Prostate gland (tissue), 2 donors: ENCODE measurements at regions of chr11 and their contacts with region 1.

Region 1: DNA sequence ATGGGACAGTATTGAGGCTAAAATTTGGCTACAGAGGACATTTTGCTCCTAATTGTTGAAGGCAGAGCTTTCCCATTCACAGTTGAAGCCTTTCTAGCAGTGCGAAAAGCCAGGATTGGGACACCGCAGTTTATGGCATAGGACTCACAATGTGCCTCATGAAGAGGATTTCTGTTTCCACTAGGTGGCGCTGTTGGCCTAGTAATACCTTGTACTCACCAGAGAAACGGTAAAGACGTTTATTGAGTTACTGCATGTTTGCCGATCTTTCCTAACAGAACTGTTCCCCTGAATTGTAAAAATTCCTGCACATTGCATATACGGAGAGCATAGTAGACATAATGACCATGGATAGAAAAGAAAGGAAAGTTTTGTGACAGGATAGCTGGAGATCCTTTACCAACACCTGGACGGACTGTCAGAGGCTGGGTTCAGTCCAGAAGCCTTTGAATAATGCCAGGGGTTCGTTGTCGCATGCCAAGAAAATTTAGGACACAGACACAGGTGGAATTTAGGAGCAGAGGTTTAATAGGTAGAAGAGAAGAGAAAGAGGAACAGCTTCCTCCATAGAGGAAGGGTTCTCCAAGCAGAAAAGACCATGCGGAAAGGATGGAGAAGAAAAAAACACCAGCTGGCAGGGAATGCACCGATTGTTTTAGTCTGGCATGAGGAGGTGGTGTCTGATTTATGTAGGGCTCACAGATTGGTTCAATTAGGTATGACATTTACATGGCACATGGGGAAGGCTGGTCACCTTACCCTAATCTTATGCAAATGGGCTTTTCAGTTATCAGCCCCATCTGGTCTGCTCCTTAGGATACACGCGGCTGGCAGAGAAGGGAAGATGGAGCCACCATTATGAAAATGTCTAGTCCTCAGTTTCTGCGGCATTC is 10.8 kb upstream of the OR51D1 start:
- DNase-seq: peak; percentile 88
- H3K4me3 ChIP-seq: no peak overlapping the region
- H3K27ac ChIP-seq: peak overlapping the region in 1 of 2 donors; percentile 51
- H3K4me1 ChIP-seq: no peaks in the 10 kb centered on the region
- H3K27me3 ChIP-seq: no peaks in the 10 kb centered on the region
- CTCF ChIP-seq: peak; percentile 65 to 90 (median 82)
- POLR2A ChIP-seq: no peak

Region 2: GRCh38 chr11:4511282-4512245 is 114.9 kb before region 1 on chr11:
- intact Hi-C with region 1: no loop called
- DNase-seq: no peak
- H3K4me3 ChIP-seq: no peak overlapping the region
- H3K27ac ChIP-seq: no peak overlapping the region
- H3K4me1 ChIP-seq: no peaks in the 10 kb centered on the region
- H3K27me3 ChIP-seq: no peaks in the 10 kb centered on the region
- CTCF ChIP-seq: no peak
- POLR2A ChIP-seq: no peak

Region 3: DNA sequence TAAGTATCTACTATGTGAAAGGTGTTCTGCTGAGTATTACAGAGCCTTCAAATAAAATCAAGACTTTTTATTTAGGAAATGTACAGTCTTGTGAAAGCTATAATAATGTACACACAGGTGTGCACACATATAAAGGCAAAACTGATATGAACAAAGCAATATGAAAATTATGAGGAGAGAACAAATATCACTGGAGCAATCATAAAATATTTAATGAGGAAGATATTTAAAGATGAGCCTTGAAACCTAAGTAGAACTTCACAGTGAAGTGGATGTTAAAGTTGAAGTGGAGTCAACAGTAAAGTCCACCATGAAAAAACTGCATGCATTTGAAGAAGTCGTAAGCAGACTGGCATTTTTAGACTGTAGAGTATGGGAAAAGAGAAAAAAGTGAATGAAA is 124.7 kb after region 1 on chr11:
- intact Hi-C with region 1: no loop called
- DNase-seq: no peak
- H3K4me3 ChIP-seq: no peak overlapping the region
- H3K27ac ChIP-seq: no peak overlapping the region
- H3K4me1 ChIP-seq: no peaks in the 10 kb centered on the region
- H3K27me3 ChIP-seq: no peaks in the 10 kb centered on the region
- CTCF ChIP-seq: no peak
- POLR2A ChIP-seq: no peak

Region 4: DNA sequence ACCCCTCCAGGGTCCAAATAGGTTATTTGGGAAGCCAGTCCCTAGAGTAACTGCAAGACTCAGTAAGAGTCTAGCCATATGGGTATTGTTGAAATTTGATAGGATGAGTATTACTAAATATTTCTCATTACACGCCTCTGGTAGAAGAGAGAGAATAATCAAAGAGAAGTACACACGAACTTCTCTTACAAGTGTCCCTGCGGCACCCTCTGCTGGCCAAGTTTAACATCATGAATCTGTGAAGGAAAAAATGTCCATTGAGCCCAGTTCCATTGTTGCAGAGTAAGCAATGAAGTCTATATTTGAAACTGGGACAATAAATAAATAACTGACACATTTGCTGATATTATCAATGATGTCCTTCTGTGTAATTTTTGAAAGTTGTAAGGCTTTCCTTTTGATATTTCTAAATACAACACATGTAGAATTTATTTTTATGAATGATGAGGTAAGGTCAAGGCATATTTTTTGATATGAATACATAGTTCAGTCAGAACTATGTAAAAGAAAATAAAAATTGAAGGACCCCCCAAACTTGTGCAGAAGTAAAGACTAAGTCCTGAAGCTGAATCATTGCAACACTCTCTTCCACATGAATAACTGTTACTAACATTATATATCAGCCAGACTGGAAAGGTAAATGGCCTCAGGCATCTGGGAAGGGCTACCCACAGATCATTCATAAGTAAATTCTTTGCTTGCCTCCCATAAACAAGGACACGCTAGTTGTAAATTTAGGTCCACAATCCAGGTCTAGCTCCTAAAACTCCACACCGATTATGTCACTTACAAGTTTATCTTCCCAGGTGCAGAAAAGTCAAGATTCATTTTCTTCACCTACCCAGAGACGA is 378.2 kb after region 1 on chr11:
- intact Hi-C with region 1: loop called (anchors 2 kb)
- DNase-seq: peak; percentile 39
- H3K4me3 ChIP-seq: no peak overlapping the region
- H3K27ac ChIP-seq: no peak overlapping the region
- H3K4me1 ChIP-seq: no peaks in the 10 kb centered on the region
- H3K27me3 ChIP-seq: no peaks in the 10 kb centered on the region
- CTCF ChIP-seq: peak in 3 of 4 experiments; percentile 49 to 55 (median 53)
- POLR2A ChIP-seq: no peak